ENCODE measurements at regions of chr7 and their contacts with region 1.

Region 1: DNA sequence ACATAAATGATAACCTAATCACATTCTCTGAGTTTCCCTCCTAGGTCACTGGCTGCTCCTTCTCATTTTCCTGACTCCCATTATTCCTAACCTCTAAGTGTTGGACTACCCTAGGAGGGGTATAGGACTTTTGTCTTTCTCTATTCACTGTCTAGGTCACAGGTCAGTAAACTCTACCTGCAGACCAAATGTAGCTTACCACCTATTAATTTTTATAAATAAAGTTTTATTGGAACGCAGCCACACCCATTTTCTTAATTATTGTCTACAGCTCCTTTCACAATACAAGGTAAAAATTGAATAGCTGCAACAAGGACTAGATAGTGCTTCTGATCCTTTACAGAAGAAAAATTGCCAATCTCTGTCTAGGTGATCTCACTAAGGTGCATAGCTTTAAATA is 156.7 kb downstream of the IMMP2L start:
- DNase-seq: no peak
- H3K4me3 ChIP-seq: no peak overlapping the region
- H3K27ac ChIP-seq: no peak overlapping the region
- H3K4me1 ChIP-seq: no peaks in the 10 kb centered on the region
- H3K27me3 ChIP-seq: no peaks in the 10 kb centered on the region
- CTCF ChIP-seq: no peak
- POLR2A ChIP-seq: no peak

Region 2: DNA sequence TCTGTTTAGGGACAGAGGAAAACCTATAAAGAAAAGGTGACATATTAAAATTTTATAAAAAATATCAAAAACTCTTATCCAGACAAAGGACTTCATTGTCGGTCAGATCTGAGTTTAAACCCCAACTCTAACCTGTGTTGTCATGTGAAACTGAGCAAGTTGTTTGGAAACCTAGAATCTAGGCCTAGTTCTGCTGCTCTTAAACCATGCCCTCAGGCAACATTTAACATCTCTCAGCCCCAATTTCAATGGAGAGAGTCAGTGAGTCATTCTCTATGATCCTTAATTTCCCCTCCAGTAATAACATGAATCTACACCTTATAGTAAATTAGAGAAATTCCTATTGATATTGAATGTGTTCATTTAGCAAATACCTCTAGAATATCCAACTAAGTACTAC is 35.6 kb before region 1 on chr7:
- CTCF ChIA-PET with region 1: no interaction called
- POLR2A ChIA-PET with region 1: no interaction called
- dilution Hi-C with region 1: no loop called
- intact Hi-C with region 1: no loop called
- DNase-seq: no peak
- H3K4me3 ChIP-seq: no peak overlapping the region
- H3K27ac ChIP-seq: no peak overlapping the region
- H3K4me1 ChIP-seq: no peaks in the 10 kb centered on the region
- H3K27me3 ChIP-seq: no peaks in the 10 kb centered on the region
- CTCF ChIP-seq: no peak
- POLR2A ChIP-seq: no peak

Region 3: DNA sequence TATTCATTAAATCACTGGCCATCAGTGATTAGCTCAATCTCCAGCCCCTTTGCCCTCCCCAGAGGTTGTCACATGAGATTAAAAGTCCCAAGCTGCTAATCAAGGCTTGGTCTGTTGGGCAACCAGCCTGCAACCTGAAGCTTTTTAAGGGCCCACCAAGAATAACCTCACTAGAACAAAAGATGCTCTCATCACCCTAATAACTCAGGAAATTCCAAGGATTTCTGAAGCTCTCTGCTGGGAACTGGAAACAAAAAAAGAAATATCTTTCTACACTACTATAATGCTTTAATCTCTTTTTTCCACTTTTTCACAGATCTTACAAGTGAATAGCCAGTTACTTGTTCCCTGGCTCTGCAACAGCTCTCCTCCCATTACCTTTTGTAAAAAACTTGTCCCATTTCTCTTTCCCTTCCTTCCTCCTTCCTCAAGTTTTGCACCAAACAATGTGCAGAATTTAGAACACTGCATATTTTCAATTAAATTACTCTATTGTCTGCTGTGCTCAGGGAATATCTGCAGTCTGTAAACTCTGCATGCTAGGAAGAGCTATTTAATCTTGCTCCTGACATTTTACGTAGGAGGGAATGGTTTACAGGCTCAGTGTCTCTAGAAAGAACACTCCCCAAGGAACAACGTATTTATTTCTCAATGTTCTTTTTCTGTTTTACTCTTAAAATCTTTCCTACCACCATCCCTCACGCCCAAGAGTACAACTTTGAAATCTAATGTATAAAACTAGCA is 12.4 kb before region 1 on chr7:
- CTCF ChIA-PET with region 1: interaction called, 10 read pairs
- POLR2A ChIA-PET with region 1: no interaction called
- dilution Hi-C with region 1: no loop called
- intact Hi-C with region 1: no loop called
- DNase-seq: peak; percentile 74
- H3K4me3 ChIP-seq: no peak overlapping the region
- H3K27ac ChIP-seq: peak overlapping the region; percentile 8
- H3K4me1 ChIP-seq: peaks cover 10% of the 10 kb centered on the region
- H3K27me3 ChIP-seq: no peaks in the 10 kb centered on the region
- CTCF ChIP-seq: no peak
- POLR2A ChIP-seq: no peak

Region 4: GRCh38 chr7:111527545-111527944 is 121.9 kb after region 1 on chr7:
- CTCF ChIA-PET with region 1: no interaction called
- POLR2A ChIA-PET with region 1: no interaction called
- dilution Hi-C with region 1: no loop called
- intact Hi-C with region 1: no loop called
- DNase-seq: no peak
- H3K4me3 ChIP-seq: no peak overlapping the region
- H3K27ac ChIP-seq: no peak overlapping the region
- H3K4me1 ChIP-seq: peaks cover 16% of the 10 kb centered on the region
- H3K27me3 ChIP-seq: no peaks in the 10 kb centered on the region
- CTCF ChIP-seq: no peak
- POLR2A ChIP-seq: no peak